Panc1 (cell line): ENCODE measurements at regions of chr1 and their contacts with region 1.

Region 1: GRCh38 chr1:19818324-19818723 is 3.2 kb upstream of the RNF186 start:
- DNase-seq: no peak
- ATAC-seq: no peak
- H3K4me3 ChIP-seq: no peak overlapping the region
- H3K27ac ChIP-seq: no peak overlapping the region
- H3K4me1 ChIP-seq: no peaks in the 10 kb centered on the region
- H3K27me3 ChIP-seq: no peaks in the 10 kb centered on the region
- CTCF ChIP-seq: no peak

Region 2: DNA sequence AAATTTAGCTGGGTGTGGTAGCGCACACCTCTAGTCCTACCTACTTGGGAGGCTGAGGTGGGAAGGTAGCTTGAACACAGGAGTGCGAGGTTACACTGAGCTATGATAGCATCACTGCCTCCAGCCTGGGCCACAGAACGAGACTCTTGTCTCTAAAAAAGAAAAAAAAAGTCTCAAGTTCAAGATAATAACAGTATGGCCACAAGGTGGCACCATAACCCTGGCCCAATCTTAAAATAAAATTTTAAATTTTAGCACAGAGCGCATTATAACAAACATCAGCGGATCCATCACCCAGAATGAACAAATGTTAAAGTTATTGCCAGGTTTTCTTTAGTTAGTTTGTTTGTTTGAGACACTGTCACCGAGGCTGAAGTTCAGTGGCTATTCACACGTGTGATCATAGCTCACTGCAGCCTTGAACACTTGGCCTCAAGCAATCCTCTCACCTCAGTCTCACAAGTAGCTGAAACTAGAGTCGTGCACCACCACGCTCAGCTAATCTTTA is 156.5 kb before region 1 on chr1:
- CTCF ChIA-PET with region 1: no interaction called
- POLR2A ChIA-PET with region 1: no interaction called
- in situ Hi-C with region 1: no loop called
- intact Hi-C with region 1: no loop called
- DNase-seq: no peak
- ATAC-seq: no peak
- H3K4me3 ChIP-seq: no peak overlapping the region
- H3K27ac ChIP-seq: no peak overlapping the region
- H3K4me1 ChIP-seq: peaks cover 12% of the 10 kb centered on the region
- H3K27me3 ChIP-seq: peaks cover 5% of the 10 kb centered on the region; the same call in 1 of the 2 replicates
- CTCF ChIP-seq: peak; percentile 88

Region 3: GRCh38 chr1:19775320-19775719 is 43.0 kb before region 1 on chr1:
- CTCF ChIA-PET with region 1: no interaction called
- POLR2A ChIA-PET with region 1: interaction called, 16 read pairs
- in situ Hi-C with region 1: no loop called
- intact Hi-C with region 1: no loop called
- DNase-seq: no peak
- ATAC-seq: no peak
- H3K4me3 ChIP-seq: no peak overlapping the region
- H3K27ac ChIP-seq: no peak overlapping the region
- H3K4me1 ChIP-seq: no peaks in the 10 kb centered on the region
- H3K27me3 ChIP-seq: no peaks in the 10 kb centered on the region
- CTCF ChIP-seq: no peak

Region 4: GRCh38 chr1:19861034-19861433 is 42.7 kb after region 1 on chr1:
- CTCF ChIA-PET with region 1: no interaction called
- POLR2A ChIA-PET with region 1: no interaction called
- in situ Hi-C with region 1: no loop called
- intact Hi-C with region 1: no loop called
- DNase-seq: no peak
- ATAC-seq: no peak
- H3K4me3 ChIP-seq: no peak overlapping the region
- H3K27ac ChIP-seq: no peak overlapping the region
- H3K4me1 ChIP-seq: no peaks in the 10 kb centered on the region
- H3K27me3 ChIP-seq: peaks cover 2% of the 10 kb centered on the region; the same call in 1 of the 2 replicates
- CTCF ChIP-seq: no peak